ENCODE measurements at regions of chr19 and their contacts with region 1.

Region 1: GRCh38 chr19:15091901-15092753 is 10.1 kb downstream of the OR1I1 start:
- DNase-seq: no peak
- H3K4me3 ChIP-seq: no peak overlapping the region
- H3K27ac ChIP-seq: no peak overlapping the region
- H3K4me1 ChIP-seq: peaks cover 0 to 4% (median 0%) of the 10 kb centered on the region in 4 donors
- H3K27me3 ChIP-seq: peaks cover 0 to 8% of the 10 kb centered on the region in 2 donors
- CTCF ChIP-seq: peak; percentile 47 to 61

Region 2: GRCh38 chr19:15141596-15141995 is 49.5 kb after region 1 on chr19:
- intact Hi-C with region 1: no loop called
- DNase-seq: peak in 1 of 2 donors; percentile 48
- H3K4me3 ChIP-seq: no peak overlapping the region
- H3K27ac ChIP-seq: no peak overlapping the region
- H3K4me1 ChIP-seq: peaks cover 0 to 5% (median 0%) of the 10 kb centered on the region in 4 donors
- H3K27me3 ChIP-seq: no peaks in the 10 kb centered on the region
- CTCF ChIP-seq: no peak

Region 3: DNA sequence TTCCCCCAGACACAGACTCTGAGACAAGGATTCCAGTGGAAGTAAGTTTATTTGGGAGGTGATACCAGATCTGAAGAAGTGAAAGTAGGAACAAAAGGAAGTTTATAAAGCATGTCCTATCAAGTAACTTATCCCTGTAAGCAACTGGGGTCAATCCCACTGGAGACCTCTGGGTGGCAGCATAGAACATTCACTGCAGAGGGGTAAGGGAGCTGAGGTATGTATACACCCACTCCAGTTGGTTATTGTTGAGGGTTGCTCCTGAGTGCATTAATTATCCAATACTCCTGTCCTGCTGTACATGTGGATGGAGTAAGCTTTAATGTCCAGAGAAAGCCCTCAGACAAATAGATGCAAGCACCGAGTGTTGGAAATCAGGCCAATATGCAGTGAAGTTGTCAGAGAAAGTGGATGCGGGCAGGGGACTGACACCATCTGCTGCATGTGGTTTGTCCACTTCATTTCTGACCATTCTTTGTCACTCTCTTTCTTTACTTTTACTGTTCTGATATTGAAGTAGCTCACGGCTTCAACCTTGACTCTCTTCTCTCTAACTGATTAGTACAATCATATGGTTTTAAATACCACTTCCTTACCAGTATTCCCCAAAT is 62.0 kb after region 1 on chr19:
- intact Hi-C with region 1: loop called (anchors 5 kb)
- DNase-seq: peak in 1 of 2 donors; percentile 53
- H3K4me3 ChIP-seq: no peak overlapping the region
- H3K27ac ChIP-seq: no peak overlapping the region
- H3K4me1 ChIP-seq: no peaks in the 10 kb centered on the region
- H3K27me3 ChIP-seq: no peaks in the 10 kb centered on the region
- CTCF ChIP-seq: peak; percentile 31 to 45

Region 4: GRCh38 chr19:15170345-15170744 is 78.2 kb after region 1 on chr19:
- intact Hi-C with region 1: no loop called
- DNase-seq: no peak
- H3K4me3 ChIP-seq: no peak overlapping the region
- H3K27ac ChIP-seq: peak overlapping the region; percentile 33 to 43
- H3K4me1 ChIP-seq: no peaks in the 10 kb centered on the region
- H3K27me3 ChIP-seq: no peaks in the 10 kb centered on the region
- CTCF ChIP-seq: no peak

Region 5: DNA sequence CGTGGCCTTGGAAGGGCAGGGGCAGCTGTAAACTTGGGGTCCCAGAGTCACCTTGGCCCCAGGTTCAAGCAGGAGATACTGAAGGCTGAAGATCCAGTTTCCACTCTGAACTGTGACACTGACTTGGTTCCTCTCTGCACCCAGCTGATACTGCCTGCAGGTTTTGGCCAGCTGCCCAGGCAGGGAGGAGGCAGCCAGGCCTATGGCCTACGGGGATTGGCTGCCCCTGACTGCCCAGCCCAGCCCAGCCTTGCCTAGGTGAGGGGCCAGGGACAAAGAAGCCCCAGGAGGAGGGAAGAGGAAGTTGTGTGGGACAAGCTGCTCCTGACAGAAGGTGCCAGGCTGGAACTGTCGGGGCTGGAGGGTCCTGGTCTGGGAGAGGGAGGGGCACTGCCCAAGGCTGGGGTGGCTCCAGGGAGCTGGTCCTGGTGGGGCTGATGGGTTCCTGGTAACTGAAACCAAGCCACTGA is 471.2 kb after region 1 on chr19:
- intact Hi-C with region 1: loop called (anchors 5 kb)
- DNase-seq: no peak
- H3K4me3 ChIP-seq: no peak overlapping the region
- H3K27ac ChIP-seq: no peak overlapping the region
- H3K4me1 ChIP-seq: peaks cover 0 to 5% (median 0%) of the 10 kb centered on the region in 4 donors
- H3K27me3 ChIP-seq: peaks cover 0 to 38% of the 10 kb centered on the region in 2 donors
- CTCF ChIP-seq: no peak